Right ventricle myocardium inferior (tissue), 1 donor: ENCODE measurements at regions of chr12 and their contacts with region 1.

Region 1: DNA sequence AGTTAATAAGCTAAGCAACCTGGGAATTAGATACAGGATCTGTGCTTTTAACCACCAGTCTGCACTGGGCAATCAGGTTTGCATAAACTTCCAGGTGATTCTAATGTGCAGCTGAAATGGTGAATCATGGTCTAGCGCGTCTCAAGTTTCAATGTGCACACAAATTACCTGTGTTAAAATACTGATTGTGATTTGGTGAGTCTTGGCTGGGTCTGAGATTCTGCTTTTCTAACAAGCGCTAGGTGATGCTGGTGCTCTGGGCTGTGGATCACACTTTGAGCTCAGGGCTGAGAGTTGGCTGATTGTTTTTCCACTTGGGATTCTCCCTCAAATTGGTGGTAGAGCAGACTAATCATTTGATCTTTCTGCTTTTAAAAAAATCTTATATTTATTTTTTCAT is 124.8 kb downstream of the C12orf75 start:
- DNase-seq: no peak
- ATAC-seq: no peak

Region 2: DNA sequence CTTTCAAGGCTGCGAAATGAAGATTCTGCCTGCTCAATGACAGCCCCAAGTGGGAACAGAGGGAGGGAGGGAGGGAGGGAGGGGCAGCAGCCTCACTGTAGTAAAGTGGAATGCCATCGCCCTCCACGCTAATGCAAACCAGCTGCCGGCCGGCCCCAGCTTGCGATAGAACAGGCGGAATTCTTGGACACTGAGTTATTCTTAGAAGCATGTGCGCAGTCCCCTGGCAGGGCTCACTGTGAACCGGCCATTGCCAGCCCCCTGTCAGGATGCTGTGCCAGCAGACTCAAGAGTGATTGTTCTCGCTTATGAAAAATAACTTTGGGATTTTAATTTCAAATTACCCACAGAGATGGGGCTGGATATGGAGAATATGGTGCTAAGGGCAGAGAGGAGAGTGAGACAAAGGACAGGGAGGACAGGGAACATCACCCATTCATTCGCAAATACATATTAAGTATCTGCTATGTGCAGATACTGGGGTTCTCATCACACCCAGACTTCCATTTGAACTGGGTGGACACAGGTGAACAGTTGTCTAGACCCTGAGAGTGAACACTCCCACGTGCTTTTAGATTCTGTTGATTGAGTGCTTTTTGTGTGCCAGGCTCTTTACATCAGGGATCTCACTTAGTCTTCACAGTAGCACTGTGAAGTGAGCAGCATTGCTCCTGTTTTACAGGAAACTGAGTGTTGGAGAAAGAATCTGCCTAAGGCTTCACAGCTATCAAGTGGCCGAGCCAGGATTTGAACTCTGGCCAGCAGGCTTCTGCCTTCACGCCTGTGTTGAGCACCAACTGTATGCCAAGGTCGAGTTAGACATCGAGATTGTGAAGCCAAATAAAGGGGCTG is 68.1 kb after region 1 on chr12:
- intact Hi-C with region 1: loop called (anchors 5 kb)
- DNase-seq: peak; percentile 90
- ATAC-seq: peak; percentile 98

Region 3: DNA sequence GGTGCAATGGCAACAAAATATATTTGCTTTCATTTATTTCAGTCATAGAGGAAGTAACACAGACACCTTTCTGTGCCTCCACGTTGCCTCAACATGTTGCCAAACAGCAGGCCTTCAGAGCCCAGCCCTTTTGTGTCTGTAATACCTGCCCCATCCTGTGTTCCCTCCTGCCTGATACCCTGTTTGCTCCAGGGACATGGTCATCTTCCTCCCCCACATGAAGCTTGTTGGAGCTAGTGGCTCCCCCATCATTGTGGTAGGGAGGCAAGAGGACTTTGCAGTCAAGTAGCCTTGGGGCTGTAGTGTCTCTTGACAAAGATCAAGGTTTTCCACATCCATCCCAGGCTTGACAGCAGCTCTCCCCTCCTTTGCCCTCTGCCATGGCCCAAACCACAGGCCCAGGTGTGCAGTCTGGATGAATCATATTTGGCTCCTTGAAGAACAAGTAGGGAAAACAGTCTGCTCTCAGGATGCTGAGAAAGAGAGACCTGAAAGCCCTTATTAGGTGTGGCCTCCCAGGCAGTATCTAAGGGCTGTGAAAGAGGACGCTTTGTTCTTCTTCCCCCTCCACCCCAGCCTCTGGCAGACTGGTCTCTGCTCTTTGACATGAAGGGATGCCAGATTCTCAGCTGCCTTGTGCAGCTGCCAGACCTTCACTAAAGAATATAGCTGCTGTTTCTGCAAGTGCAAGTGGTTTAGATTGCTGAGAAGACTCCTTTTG is 204.3 kb after region 1 on chr12:
- intact Hi-C with region 1: no loop called
- DNase-seq: no peak
- ATAC-seq: peak; percentile 85